AG04450 (cell line): ENCODE measurements at regions of chr9 and their contacts with region 1.

Region 1: GRCh38 chr9:126500684-126501382 is 112.9 kb upstream of the LMX1B start:
- DNase-seq: peak; percentile 50
- H3K4me3 ChIP-seq: no peak overlapping the region
- H3K27ac ChIP-seq: no peak overlapping the region
- H3K27me3 ChIP-seq: peaks cover 2% of the 10 kb centered on the region
- CTCF ChIP-seq: peak; percentile 91

Region 2: DNA sequence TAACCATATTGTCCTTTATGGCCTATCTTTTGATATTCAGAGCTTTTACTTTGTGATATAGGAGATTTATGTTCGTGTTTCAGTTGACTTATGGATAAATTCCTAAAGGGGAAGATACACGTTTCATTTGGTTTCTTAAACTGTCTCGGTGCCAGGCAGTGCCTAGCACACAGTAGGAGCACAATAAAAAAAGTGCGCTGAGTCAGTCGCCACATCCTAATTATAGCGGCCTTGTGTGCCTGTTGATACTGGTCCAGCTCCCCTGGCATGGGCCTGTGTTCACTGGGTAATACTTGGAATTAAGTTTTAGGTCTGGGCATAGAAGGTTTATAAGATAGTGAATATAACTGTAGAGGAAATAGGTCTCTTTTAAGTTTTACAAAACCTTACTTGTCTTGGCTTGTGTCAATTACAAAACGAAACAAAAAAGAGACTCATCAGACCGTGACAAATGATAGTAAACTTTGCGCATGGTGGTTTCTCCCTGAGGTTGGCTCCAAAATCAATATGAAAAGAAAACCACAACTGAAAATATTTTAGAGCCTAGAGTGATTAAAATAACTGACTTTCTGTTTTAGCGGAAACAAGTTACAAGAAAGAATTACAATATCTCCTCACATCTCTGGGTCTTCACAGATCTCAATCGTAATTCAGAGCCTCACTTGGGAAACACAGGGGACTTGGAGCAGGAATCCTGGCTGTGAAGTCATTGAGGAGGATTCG is 89.4 kb before region 1 on chr9:
- CTCF ChIA-PET with region 1: no interaction called
- POLR2A ChIA-PET with region 1: no interaction called
- DNase-seq: no peak
- H3K4me3 ChIP-seq: no peak overlapping the region
- H3K27ac ChIP-seq: no peak overlapping the region
- H3K27me3 ChIP-seq: no peaks in the 10 kb centered on the region
- CTCF ChIP-seq: no peak

Region 3: DNA sequence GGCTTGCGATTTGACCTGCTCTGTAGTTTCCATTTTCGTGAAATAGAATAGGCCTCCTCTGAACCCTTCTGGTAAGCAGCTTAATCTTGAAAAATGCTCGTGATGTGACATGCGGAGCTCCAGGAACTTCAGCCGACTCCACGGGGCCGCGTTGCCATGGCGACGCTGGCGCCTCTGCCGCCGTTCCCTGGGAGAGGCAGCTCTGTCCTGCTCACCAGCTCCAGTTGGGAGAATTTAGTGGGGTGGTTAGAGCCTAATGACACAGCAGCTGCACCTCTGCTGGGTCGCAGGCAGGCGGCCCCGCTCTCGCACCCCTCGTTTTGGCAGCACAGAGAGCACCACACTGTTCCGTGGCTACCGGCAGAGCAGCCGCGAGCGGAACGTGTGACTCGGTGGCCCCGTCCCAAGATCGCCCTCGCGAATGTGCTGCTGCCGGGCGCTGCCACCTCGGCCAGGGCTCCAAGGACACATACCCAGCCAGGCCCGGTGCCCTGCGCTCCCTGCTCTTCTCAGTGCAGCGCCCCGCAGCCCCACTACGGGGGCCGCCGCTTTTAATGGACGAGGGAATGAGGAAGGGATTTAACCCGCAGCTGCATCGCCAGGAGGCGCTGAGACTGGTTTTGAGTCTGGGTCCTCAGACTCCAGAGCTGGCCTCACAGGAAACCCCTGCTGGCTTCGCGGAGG is 18.3 kb before region 1 on chr9:
- CTCF ChIA-PET with region 1: interaction called, 14 read pairs
- POLR2A ChIA-PET with region 1: no interaction called
- DNase-seq: no peak
- H3K4me3 ChIP-seq: no peak overlapping the region
- H3K27ac ChIP-seq: no peak overlapping the region
- H3K27me3 ChIP-seq: no peaks in the 10 kb centered on the region
- CTCF ChIP-seq: no peak

Region 4: GRCh38 chr9:126514047-126514821 is 13.4 kb after region 1 on chr9:
- CTCF ChIA-PET with region 1: interaction called, 59 read pairs
- POLR2A ChIA-PET with region 1: no interaction called
- DNase-seq: no peak
- H3K4me3 ChIP-seq: peak overlapping the region; percentile 39; the same call in 1 of the 2 replicates
- H3K27ac ChIP-seq: no peak overlapping the region
- H3K27me3 ChIP-seq: peaks cover 24% of the 10 kb centered on the region
- CTCF ChIP-seq: peak; percentile 32